Activated T-helper 1 cell treated with anti-CD3 and anti-CD28 coated beads, Interleukin-12 subunit alpha, Interleukin-12 subunit beta, Interleukin-2, Interleukin-4 antibody, amounts not matched to agents 30 ng/mL and 10 ng/mL and 1 ng/mL, durations not matched to agents 14 hours and 24 hours and 36 hours (primary cell): ENCODE measurements at regions of chr6 and their contacts with region 1.

Region 1: DNA sequence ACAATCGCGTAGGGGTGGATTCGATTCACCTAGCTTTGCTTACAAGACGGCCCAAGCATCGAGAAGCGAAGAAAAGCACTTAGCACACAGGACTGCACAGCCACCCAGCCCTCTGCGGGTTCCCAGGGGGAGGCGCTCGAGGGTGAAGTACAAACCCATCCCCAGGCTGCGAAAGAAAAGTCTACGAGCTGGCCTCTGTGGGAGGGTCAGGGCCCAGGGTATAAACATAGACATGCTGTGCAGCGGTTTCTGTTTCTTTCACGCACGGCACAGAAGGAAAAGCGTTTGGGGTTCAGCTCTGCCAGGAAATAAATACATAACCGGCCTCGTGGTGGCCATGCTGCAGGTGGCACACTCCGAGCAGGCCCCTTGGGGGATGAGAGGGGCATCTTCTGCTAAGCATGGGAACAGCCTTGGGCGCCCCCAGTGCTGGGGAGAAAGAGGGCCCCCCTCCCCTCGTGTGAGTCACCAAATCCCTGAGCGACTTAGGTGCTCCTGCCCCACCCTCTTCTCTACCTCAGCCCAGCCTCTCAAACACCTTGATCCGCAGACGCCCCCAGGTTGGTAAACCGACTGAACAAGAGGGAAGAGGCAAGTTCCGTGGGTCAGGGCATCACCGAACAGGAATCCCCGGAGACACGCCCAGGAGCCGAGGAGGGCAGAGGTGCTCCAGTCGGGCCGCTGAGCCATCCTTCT is 91.6 kb upstream of the RIPOR2 start:
- DNase-seq: peak; percentile 72
- H3K4me3 Mint-ChIP-seq: peak overlapping the region; percentile 74
- H3K27ac Mint-ChIP-seq: peak overlapping the region; percentile 83
- H3K4me1 Mint-ChIP-seq: peaks cover 48% of the 10 kb centered on the region
- H3K27me3 Mint-ChIP-seq: no peaks in the 10 kb centered on the region

Region 2: DNA sequence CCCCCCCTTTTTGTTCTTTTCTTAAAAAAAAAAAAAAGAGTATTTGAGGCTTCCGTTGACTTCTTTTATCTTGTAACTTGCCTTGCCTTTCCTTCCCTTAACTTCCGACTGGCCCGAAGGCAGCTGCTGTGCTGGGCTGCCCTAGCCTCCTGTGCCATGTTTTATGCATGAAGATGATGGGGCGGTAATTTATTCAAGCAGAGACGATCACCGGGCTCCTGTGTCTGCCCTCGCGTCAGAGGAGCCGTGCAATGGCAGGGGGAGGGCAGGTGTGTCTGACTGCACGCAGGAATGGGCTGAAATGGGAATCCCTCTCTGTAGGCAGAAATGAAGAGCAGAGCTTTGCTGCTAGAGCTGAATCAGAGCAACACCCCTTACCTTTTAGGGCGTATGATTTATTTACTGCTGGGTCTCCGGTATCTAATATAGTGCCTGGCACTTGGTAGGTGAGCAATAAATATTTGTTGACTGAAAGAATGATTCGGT is 14.7 kb after region 1 on chr6:
- intact Hi-C with region 1: loop called (anchors 1 kb)
- DNase-seq: peak; percentile 30
- H3K4me3 Mint-ChIP-seq: peak overlapping the region; percentile 88
- H3K27ac Mint-ChIP-seq: peak overlapping the region; percentile 95
- H3K4me1 Mint-ChIP-seq: peaks cover 66% of the 10 kb centered on the region
- H3K27me3 Mint-ChIP-seq: no peaks in the 10 kb centered on the region

Region 3: DNA sequence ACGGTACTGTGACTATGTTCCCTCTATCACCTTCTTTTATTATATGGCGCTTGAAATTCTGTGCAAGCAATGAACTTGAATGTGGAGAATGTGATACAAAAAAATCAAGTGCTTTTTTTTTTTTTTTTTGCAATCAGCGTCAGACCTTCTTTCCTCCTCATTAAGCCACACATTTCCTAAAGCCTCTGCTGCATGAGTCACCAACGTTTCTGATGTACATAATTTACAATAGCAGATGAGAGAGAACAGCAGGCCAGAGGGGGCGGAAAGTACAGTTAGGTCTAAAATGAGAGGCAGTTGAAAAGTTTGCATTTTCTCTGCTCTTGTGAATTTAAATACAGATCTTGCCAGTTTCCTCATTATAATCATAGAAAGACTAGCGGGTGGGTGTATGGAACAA is 23.0 kb after region 1 on chr6:
- intact Hi-C with region 1: loop called (anchors 1 kb)
- DNase-seq: peak; percentile 32
- H3K4me3 Mint-ChIP-seq: peak overlapping the region; percentile 74
- H3K27ac Mint-ChIP-seq: peak overlapping the region; percentile 95
- H3K4me1 Mint-ChIP-seq: peaks cover 59% of the 10 kb centered on the region
- H3K27me3 Mint-ChIP-seq: no peaks in the 10 kb centered on the region

Region 4: GRCh38 chr6:25297039-25297441 is 269.7 kb after region 1 on chr6:
- intact Hi-C with region 1: no loop called
- DNase-seq: no peak
- H3K4me3 Mint-ChIP-seq: no peak overlapping the region
- H3K27ac Mint-ChIP-seq: no peak overlapping the region
- H3K4me1 Mint-ChIP-seq: no peaks in the 10 kb centered on the region
- H3K27me3 Mint-ChIP-seq: peaks cover 2% of the 10 kb centered on the region